ENCODE measurements at regions of chr12 and their contacts with region 1.

Region 1: GRCh38 chr12:11885261-11886038 is 185.3 kb upstream of the BCL2L14 start:
- DNase-seq: no peak
- H3K4me3 ChIP-seq: no peak overlapping the region
- H3K27ac ChIP-seq: no peak overlapping the region
- H3K4me1 ChIP-seq: no peaks in the 10 kb centered on the region
- H3K27me3 ChIP-seq: no peaks in the 10 kb centered on the region
- CTCF ChIP-seq: no peak
- EP300 ChIP-seq: no peak
- POLR2A ChIP-seq: no peak

Region 2: GRCh38 chr12:11661491-11662089 is 223.9 kb before region 1 on chr12:
- intact Hi-C with region 1: loop called in 1 of 4 experiments (anchors 10 kb)
- DNase-seq: no peak
- H3K4me3 ChIP-seq: no peak overlapping the region
- H3K27ac ChIP-seq: no peak overlapping the region
- H3K4me1 ChIP-seq: peaks cover 2% of the 10 kb centered on the region
- H3K27me3 ChIP-seq: no peaks in the 10 kb centered on the region
- CTCF ChIP-seq: no peak
- EP300 ChIP-seq: no peak
- POLR2A ChIP-seq: no peak

Region 3: GRCh38 chr12:11798856-11799501 is 86.5 kb before region 1 on chr12:
- intact Hi-C with region 1: no loop called
- DNase-seq: no peak
- H3K4me3 ChIP-seq: no peak overlapping the region
- H3K27ac ChIP-seq: no peak overlapping the region
- H3K4me1 ChIP-seq: peaks cover 7% of the 10 kb centered on the region
- H3K27me3 ChIP-seq: no peaks in the 10 kb centered on the region
- CTCF ChIP-seq: no peak
- EP300 ChIP-seq: no peak
- POLR2A ChIP-seq: no peak